Activated T-helper 2 cell treated with anti-CD3 and anti-CD28 coated beads, Interferon-gamma antibody, Interleukin-2, Interleukin-4, amounts not matched to agents 10 μg/mL and 5 μg/mL and 100 μg/mL, durations not matched to agents 14 hours and 24 hours and 36 hours (primary cell): ENCODE measurements at regions of chr17 and their contacts with region 1.

Region 1: GRCh38 chr17:64145757-64146417 is 15.9 kb upstream of the ERN1 start:
- DNase-seq: peak; percentile 94
- H3K4me3 Mint-ChIP-seq: no peak overlapping the region
- H3K27ac Mint-ChIP-seq: no peak overlapping the region
- H3K4me1 Mint-ChIP-seq: peaks cover 21% of the 10 kb centered on the region
- H3K27me3 Mint-ChIP-seq: no peaks in the 10 kb centered on the region

Region 2: GRCh38 chr17:64036198-64036922 is 109.5 kb before region 1 on chr17:
- intact Hi-C with region 1: no loop called
- DNase-seq: no peak
- H3K4me3 Mint-ChIP-seq: no peak overlapping the region
- H3K27ac Mint-ChIP-seq: no peak overlapping the region
- H3K4me1 Mint-ChIP-seq: no peaks in the 10 kb centered on the region
- H3K27me3 Mint-ChIP-seq: no peaks in the 10 kb centered on the region

Region 3: GRCh38 chr17:64216338-64217248 is 70.7 kb after region 1 on chr17:
- intact Hi-C with region 1: loop called (anchors 5 kb)
- DNase-seq: no peak
- H3K4me3 Mint-ChIP-seq: no peak overlapping the region
- H3K27ac Mint-ChIP-seq: no peak overlapping the region
- H3K4me1 Mint-ChIP-seq: peaks cover 21% of the 10 kb centered on the region
- H3K27me3 Mint-ChIP-seq: no peaks in the 10 kb centered on the region

Region 4: GRCh38 chr17:64262417-64263260 is 116.8 kb after region 1 on chr17 and contains the start of gene TEX2:
- intact Hi-C with region 1: loop called (anchors 2 kb)
- DNase-seq: peak; percentile 60
- H3K4me3 Mint-ChIP-seq: peak within 1 kb of the TSS; percentile 90
- H3K27ac Mint-ChIP-seq: peak within 1 kb of the TSS; percentile 85
- H3K4me1 Mint-ChIP-seq: peaks cover 28% of the 10 kb centered on the region
- H3K27me3 Mint-ChIP-seq: peaks cover 4% of the 10 kb centered on the region
- total RNA-seq, gene TEX2: 20.7 and 22.0 TPM in 2 replicates

Region 5: GRCh38 chr17:64281962-64282727 is 136.3 kb after region 1 on chr17:
- intact Hi-C with region 1: loop called (anchors 1 kb)
- DNase-seq: peak; percentile 30
- H3K4me3 Mint-ChIP-seq: no peak overlapping the region
- H3K27ac Mint-ChIP-seq: no peak overlapping the region
- H3K4me1 Mint-ChIP-seq: peaks cover 4% of the 10 kb centered on the region
- H3K27me3 Mint-ChIP-seq: no peaks in the 10 kb centered on the region